Endothelial cell of umbilical vein (primary cell): ENCODE measurements at regions of chr10 and their contacts with region 1.

Region 1: GRCh38 chr10:37976091-37976879 is at the start of gene ZNF25:
- DNase-seq: peak; percentile 97
- H3K4me3 ChIP-seq: peak within 1 kb of the TSS; percentile 52 to 91 (median 68)
- H3K27ac ChIP-seq: peak within 1 kb of the TSS; percentile 85
- H3K4me1 ChIP-seq: peaks cover 10% of the 10 kb centered on the region
- H3K27me3 ChIP-seq: no peaks in the 10 kb centered on the region
- CTCF ChIP-seq: peak; percentile 95 to 96
- POLR2A ChIP-seq: peak; percentile 38
- total RNA-seq, gene ZNF25: 5.0 and 5.2 TPM in 2 replicates

Region 2: DNA sequence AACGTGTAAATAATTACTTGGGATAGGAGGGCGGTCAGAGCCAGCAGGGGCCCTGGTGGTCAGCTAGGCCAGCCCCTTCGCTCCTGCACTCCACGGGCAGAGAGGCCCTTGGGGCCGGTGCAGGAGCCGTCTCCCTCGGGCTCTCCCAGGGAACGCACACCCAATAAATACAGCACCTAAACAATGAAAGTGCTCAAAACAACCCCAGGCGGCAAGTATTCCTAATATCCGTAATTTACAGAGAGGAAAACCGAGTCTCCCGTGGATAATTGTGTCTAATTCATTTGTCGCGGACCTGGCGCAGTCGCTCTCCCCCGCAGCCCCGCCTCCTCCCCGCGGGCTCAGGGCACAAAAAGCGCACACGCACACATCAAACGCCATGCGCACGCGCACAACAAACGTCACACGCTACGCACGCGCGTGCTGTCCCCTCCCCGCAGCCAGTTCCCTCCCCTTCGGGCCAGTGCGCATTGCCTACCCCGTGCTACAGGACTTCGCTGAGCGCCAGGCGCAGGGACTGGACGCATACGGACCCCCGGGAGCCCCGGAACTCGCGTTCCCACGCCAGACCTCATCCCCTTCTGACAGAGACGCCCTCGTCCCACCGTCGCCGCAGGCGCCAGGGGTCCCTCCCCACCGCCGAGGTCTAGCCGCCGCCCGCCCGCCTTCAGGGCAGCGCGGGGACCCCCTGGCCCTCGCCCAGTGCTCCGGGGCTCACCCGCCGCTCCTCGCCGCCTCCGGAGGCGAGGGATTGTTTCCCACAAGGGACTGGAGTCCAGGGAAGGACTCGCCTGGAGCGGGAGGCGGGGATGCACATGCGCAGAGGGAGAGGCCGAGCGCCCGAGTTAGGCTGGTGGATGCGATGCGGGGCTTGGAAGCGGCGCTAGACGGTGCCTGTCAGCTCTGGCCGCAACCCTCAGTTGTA is 118.7 kb before region 1 on chr10 and contains the start of gene ZNF248:
- CTCF ChIA-PET with region 1: no interaction called
- POLR2A ChIA-PET with region 1: no interaction called
- dilution Hi-C with region 1: no loop called
- intact Hi-C with region 1: loop called (anchors 1 kb)
- DNase-seq: peak; percentile 97
- H3K4me3 ChIP-seq: peak within 1 kb of the TSS; percentile 51 to 91 (median 64)
- H3K27ac ChIP-seq: peak within 1 kb of the TSS; percentile 71
- H3K4me1 ChIP-seq: peaks cover 11% of the 10 kb centered on the region
- H3K27me3 ChIP-seq: no peaks in the 10 kb centered on the region
- CTCF ChIP-seq: no peak
- POLR2A ChIP-seq: peak; percentile 96
- total RNA-seq, gene ZNF248: 6.4 and 6.5 TPM in 2 replicates

Region 3: DNA sequence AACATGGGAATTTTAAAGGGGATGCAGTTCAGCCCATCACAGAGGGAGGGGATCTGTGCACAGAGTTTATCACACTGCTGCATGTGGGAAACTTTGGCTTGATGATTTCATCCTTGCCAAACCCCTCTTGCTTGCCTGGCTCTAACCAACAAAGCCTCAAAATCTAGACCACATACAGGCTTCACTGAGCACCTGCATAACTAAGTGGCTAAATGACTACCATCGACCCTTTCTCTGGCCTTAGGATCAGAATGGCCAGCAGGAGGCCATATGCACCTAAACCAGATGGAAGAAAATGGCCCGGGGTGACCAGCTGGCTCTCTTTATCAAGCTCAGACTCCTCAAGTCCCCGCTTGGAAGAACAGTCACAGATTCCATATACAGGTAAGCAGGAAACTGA is 15.8 kb after region 1 on chr10:
- CTCF ChIA-PET with region 1: interaction called, 11 read pairs
- POLR2A ChIA-PET with region 1: no interaction called
- dilution Hi-C with region 1: no loop called
- intact Hi-C with region 1: no loop called
- DNase-seq: no peak
- H3K4me3 ChIP-seq: no peak overlapping the region
- H3K27ac ChIP-seq: no peak overlapping the region
- H3K4me1 ChIP-seq: no peaks in the 10 kb centered on the region
- H3K27me3 ChIP-seq: no peaks in the 10 kb centered on the region
- CTCF ChIP-seq: no peak
- POLR2A ChIP-seq: no peak

Region 4: GRCh38 chr10:38010119-38010903 is 34.0 kb after region 1 on chr10 and contains the start of gene ZNF33A:
- CTCF ChIA-PET with region 1: interaction called, 23 read pairs
- POLR2A ChIA-PET with region 1: no interaction called
- dilution Hi-C with region 1: no loop called
- intact Hi-C with region 1: loop called (anchors 1 kb)
- DNase-seq: peak; percentile 95
- H3K4me3 ChIP-seq: peak within 1 kb of the TSS; percentile 58 to 77 (median 67)
- H3K27ac ChIP-seq: peak within 1 kb of the TSS; percentile 60
- H3K4me1 ChIP-seq: peaks cover 13% of the 10 kb centered on the region
- H3K27me3 ChIP-seq: peaks cover 2 to 5% of the 10 kb centered on the region in 2 experiments
- CTCF ChIP-seq: no peak
- POLR2A ChIP-seq: no peak
- total RNA-seq, gene ZNF33A: 13.2 and 14.5 TPM in 2 replicates

Region 5: GRCh38 chr10:38094158-38094920 is 118.1 kb after region 1 on chr10 and contains the start of gene ZNF37A:
- CTCF ChIA-PET with region 1: interaction called, 15 read pairs
- POLR2A ChIA-PET with region 1: no interaction called
- dilution Hi-C with region 1: no loop called
- intact Hi-C with region 1: loop called (anchors 1 kb)
- DNase-seq: peak; percentile 96
- H3K4me3 ChIP-seq: peak within 1 kb of the TSS; percentile 29 to 65 (median 45)
- H3K27ac ChIP-seq: peak within 1 kb of the TSS; percentile 18
- H3K4me1 ChIP-seq: no peaks in the 10 kb centered on the region
- H3K27me3 ChIP-seq: no peaks in the 10 kb centered on the region
- CTCF ChIP-seq: no peak
- POLR2A ChIP-seq: peak; percentile 65
- total RNA-seq, gene ZNF37A: 10.4 and 14.5 TPM in 2 replicates